Posterior vena cava (tissue), 2 donors: ENCODE measurements at regions of chr17 and their contacts with region 1.

Region 1: DNA sequence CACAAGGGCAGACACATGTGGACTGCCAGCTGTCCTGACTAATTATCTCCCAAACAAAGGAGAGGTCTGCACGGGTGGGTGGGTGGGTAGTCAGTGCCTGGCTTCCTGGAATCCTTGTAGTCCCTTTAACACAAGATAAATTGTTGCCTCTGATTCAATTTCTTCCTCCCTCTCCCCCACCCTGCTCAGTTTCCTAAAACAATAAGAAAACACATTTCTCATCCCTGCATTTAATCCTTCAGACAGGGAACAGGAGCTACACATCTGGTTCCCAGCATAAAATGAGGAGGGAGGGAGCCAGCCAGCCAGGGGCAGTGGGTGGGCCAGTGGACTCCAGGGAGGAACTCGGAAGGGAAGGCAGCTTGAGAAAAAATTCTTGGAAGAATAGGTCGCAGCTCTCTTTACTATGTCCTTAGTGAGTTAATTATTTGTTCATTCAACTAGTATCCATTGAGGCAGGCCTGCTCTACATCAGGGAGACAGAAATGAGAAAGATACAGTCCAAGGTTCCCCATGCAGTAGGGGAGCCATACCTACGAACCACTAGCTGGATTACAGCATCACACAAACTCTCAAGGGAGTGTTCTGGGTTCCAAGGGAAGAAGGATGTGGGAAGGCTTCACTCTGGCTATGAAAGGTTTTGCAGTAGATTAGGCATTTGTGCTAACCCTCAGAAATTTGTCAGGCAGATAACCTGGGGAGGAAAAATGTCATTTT is 58.3 kb downstream of the CCT6B start:
- DNase-seq: no peak

Region 2: DNA sequence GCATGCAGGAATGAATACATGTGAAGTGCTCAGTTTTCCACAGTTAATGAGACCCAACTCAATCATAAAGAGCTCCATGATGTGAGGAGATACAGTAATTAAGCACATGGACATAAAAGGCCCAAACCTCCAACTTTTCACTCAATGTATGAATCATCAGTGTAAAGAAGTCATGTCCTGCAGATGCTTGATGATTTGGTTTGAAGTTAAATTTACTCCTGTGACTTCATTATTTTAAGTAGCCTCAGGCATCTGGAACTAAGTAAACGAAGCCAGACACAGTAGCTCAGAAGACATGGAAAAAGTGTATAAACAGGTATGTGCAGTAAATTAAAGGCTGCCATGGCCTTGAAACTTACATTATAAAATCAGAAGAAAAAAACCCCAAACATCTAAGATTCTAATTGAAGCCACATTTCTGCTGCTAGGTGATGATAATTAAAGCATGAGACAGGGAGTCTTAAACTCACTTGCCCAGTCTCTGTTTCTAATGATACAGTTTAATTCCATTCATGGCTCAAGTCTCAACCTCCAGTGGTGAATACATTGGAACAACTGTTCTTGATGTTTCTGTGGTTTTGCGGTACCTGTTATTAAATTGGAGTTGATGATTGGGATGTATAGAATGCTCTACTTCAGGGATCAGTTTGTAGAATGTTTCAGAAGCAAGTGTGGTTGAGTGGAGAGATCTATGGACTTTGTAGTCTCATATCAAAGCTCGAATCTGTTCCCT is 676.8 kb before region 1 on chr17:
- intact Hi-C with region 1: no loop called
- DNase-seq: no peak

Region 3: GRCh38 chr17:34826332-34826731 is 76.7 kb before region 1 on chr17:
- intact Hi-C with region 1: loop called in 1 of 2 experiments (anchors 2 kb)
- DNase-seq: no peak